ENCODE measurements at regions of chr12 and their contacts with region 1.

Region 1: GRCh38 chr12:6195665-6196535 is 4.3 kb upstream of the CD9 start:
- DNase-seq: peak; percentile 66
- ATAC-seq: peak; percentile 77
- H3K4me3 Mint-ChIP-seq: no peak overlapping the region
- H3K27ac Mint-ChIP-seq: no peak overlapping the region
- H3K4me1 Mint-ChIP-seq: peaks cover 24% of the 10 kb centered on the region
- H3K27me3 Mint-ChIP-seq: peaks cover 41% of the 10 kb centered on the region
- CTCF ChIP-seq: peak; percentile 45

Region 2: GRCh38 chr12:6207259-6207925 is 11.5 kb after region 1 on chr12:
- CTCF ChIA-PET with region 1: interaction called, 12 read pairs
- POLR2A ChIA-PET with region 1: no interaction called
- intact Hi-C with region 1: no loop called
- DNase-seq: no peak
- ATAC-seq: no peak
- H3K4me3 Mint-ChIP-seq: no peak overlapping the region
- H3K27ac Mint-ChIP-seq: no peak overlapping the region
- H3K4me1 Mint-ChIP-seq: peaks cover 25% of the 10 kb centered on the region
- H3K27me3 Mint-ChIP-seq: peaks cover 13% of the 10 kb centered on the region
- CTCF ChIP-seq: no peak

Region 3: DNA sequence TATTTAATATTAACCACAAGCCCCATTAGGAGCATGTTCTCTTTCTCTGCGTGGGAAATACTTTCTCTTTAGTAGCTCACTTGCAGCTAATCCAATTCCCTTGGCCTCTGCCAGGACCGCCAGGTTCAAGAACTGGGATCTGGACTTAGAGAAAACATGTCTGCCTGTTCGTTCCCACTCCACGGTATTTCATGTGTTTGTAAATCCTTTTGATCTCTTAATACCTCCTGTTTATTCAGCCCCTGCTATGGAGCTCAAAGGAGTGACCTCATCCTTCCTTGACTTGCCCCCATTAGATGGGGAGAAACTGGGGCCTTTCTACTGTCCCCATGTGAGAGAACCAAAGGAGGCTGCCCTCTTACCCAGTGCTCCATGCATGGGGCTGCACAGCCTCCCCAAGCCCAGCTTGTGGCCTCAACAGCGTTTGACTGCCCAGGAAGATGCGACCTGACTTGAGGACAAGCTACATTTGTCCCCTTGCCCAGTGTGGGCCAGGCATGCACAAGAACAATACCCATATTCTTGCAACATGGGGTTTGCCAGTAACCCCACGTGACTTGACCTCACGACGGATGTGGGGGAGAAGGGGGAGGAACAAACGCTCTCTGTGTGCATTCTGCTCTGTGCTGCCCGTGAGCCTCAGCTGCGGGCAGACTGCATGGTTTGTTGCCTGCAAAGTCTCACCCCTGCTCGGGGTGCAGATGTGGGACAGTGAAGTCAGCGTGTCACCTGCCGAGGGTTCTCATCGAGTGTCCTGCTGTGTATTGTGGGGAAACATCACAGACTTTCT is 34.6 kb after region 1 on chr12:
- CTCF ChIA-PET with region 1: interaction called, 9 read pairs
- POLR2A ChIA-PET with region 1: no interaction called
- intact Hi-C with region 1: loop called (anchors 5 kb)
- DNase-seq: peak; percentile 26
- ATAC-seq: peak; percentile 96
- H3K4me3 Mint-ChIP-seq: peak overlapping the region; percentile 59
- H3K27ac Mint-ChIP-seq: peak overlapping the region; percentile 24
- H3K4me1 Mint-ChIP-seq: peaks cover 23% of the 10 kb centered on the region
- H3K27me3 Mint-ChIP-seq: peaks cover 9% of the 10 kb centered on the region
- CTCF ChIP-seq: no peak

Region 4: DNA sequence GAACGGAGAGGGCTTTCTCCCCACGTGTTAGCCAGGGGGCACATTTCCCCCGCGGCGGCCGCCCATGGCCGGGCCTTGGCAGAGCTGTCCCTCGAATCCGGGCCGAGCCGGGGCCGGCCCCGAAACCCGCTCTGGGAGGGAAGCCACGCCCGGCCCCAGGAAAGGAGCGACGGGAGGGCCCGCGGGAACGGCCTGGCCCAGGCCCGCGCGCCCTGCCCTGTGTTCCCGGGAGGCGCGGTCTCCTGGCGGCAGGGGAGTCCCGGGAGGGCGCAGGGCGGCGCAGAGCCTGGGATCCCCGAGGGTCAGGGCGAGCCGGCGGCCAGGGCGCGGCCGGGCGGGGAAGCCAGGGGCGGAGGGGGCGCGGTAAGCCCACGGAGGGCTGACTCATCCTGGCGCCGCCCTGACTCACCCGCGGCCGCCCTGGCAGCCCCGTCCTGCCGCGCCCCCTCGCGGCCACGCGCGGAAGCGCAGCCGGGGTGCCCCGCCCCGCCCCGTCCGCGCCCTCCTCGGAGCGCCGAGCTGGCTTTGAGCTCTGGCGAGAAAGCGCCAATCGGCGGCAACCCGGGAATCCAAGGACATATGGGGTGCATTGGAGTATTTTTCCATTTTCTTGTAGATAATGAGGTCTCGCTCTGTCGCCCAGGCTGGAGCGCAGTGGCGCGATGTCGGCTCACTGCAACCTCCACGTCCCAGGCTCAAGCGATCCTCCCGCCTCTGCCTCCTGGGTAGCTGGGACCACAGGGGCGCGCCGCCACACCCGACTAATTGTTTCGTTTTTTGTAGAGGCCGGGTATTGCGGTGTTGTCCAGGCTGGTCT is 82.7 kb after region 1 on chr12:
- CTCF ChIA-PET with region 1: interaction called, 72 read pairs
- POLR2A ChIA-PET with region 1: interaction called, 6 read pairs
- intact Hi-C with region 1: loop called (anchors 1 kb)
- DNase-seq: peak; percentile 95
- ATAC-seq: peak; percentile 98
- H3K4me3 Mint-ChIP-seq: peak overlapping the region; percentile 80
- H3K27ac Mint-ChIP-seq: no peak overlapping the region
- H3K4me1 Mint-ChIP-seq: peaks cover 6% of the 10 kb centered on the region
- H3K27me3 Mint-ChIP-seq: peaks cover 48% of the 10 kb centered on the region
- CTCF ChIP-seq: peak; percentile 71

Region 5: DNA sequence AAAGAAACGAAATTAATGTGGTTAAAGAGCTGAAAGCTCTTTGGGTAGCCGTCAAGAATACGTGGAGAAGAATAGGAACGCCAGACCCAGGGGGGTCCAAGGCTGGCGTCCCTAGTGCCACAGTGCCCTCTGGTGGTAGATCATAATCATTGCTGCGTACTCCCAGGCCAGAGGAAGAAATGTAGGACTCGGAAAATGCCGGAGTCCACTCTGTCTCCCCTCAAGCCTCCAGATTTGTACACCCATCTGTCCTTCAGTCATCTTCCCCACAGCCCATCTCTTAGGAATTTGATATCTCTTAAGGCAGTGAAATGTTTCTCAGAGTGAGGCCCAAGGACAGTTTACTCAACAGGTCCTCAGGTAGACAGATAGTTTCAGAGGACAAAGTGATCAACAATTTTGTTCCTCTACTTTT is 89.2 kb after region 1 on chr12:
- CTCF ChIA-PET with region 1: interaction called, 72 read pairs
- POLR2A ChIA-PET with region 1: interaction called, 6 read pairs
- intact Hi-C with region 1: loop called (anchors 1 kb)
- DNase-seq: no peak
- ATAC-seq: peak; percentile 81
- H3K4me3 Mint-ChIP-seq: no peak overlapping the region
- H3K27ac Mint-ChIP-seq: no peak overlapping the region
- H3K4me1 Mint-ChIP-seq: no peaks in the 10 kb centered on the region
- H3K27me3 Mint-ChIP-seq: peaks cover 41% of the 10 kb centered on the region
- CTCF ChIP-seq: peak; percentile 79

Region 6: DNA sequence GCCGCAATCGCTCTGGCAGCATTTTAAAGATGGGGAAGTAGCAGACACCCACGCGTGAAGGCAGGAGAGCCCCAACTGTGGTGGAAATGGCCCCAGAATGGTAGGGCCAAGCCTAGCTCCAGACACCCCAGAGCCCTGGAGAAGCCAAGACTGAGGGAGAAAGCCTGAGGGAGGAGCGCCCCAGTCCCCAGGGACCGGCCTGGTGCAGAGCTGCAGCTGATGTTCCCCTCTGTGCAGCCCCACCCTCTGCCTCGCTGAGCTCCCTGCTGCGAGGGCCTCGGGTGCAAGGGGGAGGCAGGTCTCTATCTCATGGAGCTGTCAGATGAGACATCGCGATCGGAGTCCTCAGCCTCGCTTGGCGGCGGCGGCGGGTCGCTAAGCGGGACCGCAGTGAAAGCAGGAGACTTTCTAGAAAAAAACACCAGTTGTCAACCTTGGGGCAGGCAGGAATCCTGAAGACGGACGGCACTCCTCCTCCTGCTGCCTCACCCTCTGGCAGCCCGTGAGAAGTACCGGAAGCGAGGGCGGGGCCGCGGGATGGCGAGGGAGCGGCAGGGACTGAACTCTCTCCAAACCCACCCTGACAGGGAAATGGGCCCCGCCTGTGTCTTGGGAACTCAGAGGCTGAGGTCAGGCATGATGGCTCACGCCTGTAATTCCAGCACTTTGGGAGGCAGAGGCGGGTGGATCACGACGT is 344.4 kb after region 1 on chr12:
- CTCF ChIA-PET with region 1: interaction called, 9 read pairs
- POLR2A ChIA-PET with region 1: interaction called, 4 read pairs
- intact Hi-C with region 1: loop called (anchors 1 kb)
- DNase-seq: no peak
- ATAC-seq: peak; percentile 45
- H3K4me3 Mint-ChIP-seq: peak overlapping the region; percentile 77
- H3K27ac Mint-ChIP-seq: peak overlapping the region; percentile 74
- H3K4me1 Mint-ChIP-seq: peaks cover 46% of the 10 kb centered on the region
- H3K27me3 Mint-ChIP-seq: no peaks in the 10 kb centered on the region
- CTCF ChIP-seq: no peak

Measured in activated B cell treated with CpG ODN at 0.5 μM for 24 hours (primary cell).